K562 (cell line): ENCODE measurements at regions of chr2 and their contacts with region 1.

Region 1: DNA sequence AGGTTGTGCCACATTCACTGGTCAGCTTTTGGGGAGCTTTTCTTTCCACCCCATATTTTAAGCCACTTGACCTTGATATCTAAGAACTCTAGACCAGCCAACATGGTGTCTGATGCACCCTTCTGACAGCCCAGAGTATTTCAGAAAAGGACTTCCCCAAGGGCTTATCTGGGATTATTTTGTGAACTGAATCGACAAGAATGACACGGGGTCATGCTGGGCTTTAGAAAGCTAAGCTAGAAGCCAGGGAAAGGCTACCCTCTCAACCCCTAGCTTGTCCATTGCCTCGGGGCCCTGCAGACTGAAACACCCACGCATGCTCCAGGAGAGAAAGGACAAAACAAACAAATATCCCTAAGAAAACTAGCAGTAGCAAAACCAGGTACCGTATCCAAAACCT is 16.0 kb downstream of the SLC4A5 start:
- DNase-seq: peak in 1 of 4 experiments; percentile 28
- ATAC-seq: peak; percentile 66
- H3K4me3 ChIP-seq: no peak overlapping the region
- H3K27ac ChIP-seq: no peak overlapping the region
- H3K4me1 ChIP-seq: peaks cover 0 to 14% of the 10 kb centered on the region in 2 experiments; a peak in 4 of 5 replicates
- H3K27me3 ChIP-seq: no peaks in the 10 kb centered on the region; a peak in 1 of 5 replicates
- CTCF ChIP-seq: peak in 2 of 3 experiments; percentile 24 to 66; a peak in 2 of 6 replicates
- EP300 ChIP-seq: no peak
- POLR2A ChIP-seq: no peak
- RAD21 ChIP-seq: peak; percentile 53 to 68

Region 2: GRCh38 chr2:74267068-74267467 is 60.1 kb before region 1 on chr2:
- CTCF ChIA-PET with region 1: no interaction called
- POLR2A ChIA-PET with region 1: no interaction called
- in situ Hi-C with region 1: no loop called
- intact Hi-C with region 1: loop called (anchors 2 kb)
- DNase-seq: peak; percentile 61 to 74 (median 67)
- ATAC-seq: peak; percentile 92
- H3K4me3 ChIP-seq: no peak overlapping the region
- H3K27ac ChIP-seq: no peak overlapping the region
- H3K4me1 ChIP-seq: peaks cover 6 to 9% of the 10 kb centered on the region in 2 experiments; a peak in 3 of 5 replicates
- H3K27me3 ChIP-seq: no peaks in the 10 kb centered on the region
- CTCF ChIP-seq: peak; percentile 71 to 80 (median 72)
- EP300 ChIP-seq: 0 out of 2 replicates have a peak, but pooled peaks have one; percentile 20
- POLR2A ChIP-seq: no peak
- RAD21 ChIP-seq: peak; percentile 72 to 87

Region 3: GRCh38 chr2:74314107-74314506 is 13.1 kb before region 1 on chr2:
- CTCF ChIA-PET with region 1: no interaction called
- POLR2A ChIA-PET with region 1: interaction called, 10 read pairs
- in situ Hi-C with region 1: no loop called
- intact Hi-C with region 1: no loop called
- DNase-seq: no peak
- ATAC-seq: peak; percentile 19; the same call in 1 of the 3 replicates
- H3K4me3 ChIP-seq: no peak overlapping the region
- H3K27ac ChIP-seq: no peak overlapping the region
- H3K4me1 ChIP-seq: peaks cover 0 to 23% of the 10 kb centered on the region in 2 experiments; a peak in 3 of 5 replicates
- H3K27me3 ChIP-seq: no peaks in the 10 kb centered on the region
- CTCF ChIP-seq: no peak
- EP300 ChIP-seq: no peak
- POLR2A ChIP-seq: no peak
- RAD21 ChIP-seq: no peak